K562 (cell line): ENCODE measurements at regions of chr11 and their contacts with region 1.

Region 1: DNA sequence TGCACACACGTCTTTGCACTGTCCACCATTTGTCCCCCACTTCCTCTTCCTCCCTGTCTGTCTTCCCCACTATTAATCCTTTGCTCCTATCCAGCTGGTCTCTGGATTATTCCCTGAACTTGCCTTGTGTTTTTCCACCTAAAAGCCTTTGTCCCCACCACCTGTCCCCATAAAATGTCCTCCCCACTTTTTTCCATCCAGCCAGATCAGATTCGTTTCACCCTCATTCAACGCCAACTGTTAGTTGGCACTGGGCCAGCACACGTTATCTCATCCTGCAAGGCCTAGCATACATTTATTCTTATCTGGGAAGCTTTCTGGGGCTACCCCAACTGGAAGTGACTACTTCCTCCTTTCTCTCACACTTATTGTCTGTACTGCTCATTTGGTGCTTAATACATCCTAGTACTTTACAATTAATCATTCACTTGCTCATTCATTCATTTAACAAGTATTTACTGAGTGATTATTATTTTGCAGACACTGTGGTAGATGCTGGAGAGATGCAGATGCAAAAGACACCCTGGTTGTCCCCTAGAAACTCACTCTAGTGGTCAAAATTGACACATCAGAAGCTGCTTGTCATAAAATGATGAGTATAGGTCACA is 96.2 kb downstream of the RASSF10 start:
- DNase-seq: peak; percentile 67 to 97 (median 75)
- ATAC-seq: peak; percentile 73
- H3K4me3 ChIP-seq: no peak overlapping the region; the same call in 1 of the 2 replicates
- H3K27ac ChIP-seq: peak overlapping the region; percentile 62
- H3K4me1 ChIP-seq: peaks cover 31 to 56% of the 10 kb centered on the region in 2 experiments
- H3K27me3 ChIP-seq: no peaks in the 10 kb centered on the region
- CTCF ChIP-seq: peak in 1 of 3 experiments; percentile 32; a peak in 1 of 6 replicates
- EP300 ChIP-seq: peak; percentile 97
- POLR2A ChIP-seq: no peak
- RAD21 ChIP-seq: peak in 1 of 2 experiments; percentile 73; a peak in 3 of 4 replicates

Region 2: GRCh38 chr11:12989428-12990161 is 115.7 kb before region 1 on chr11:
- CTCF ChIA-PET with region 1: no interaction called
- POLR2A ChIA-PET with region 1: no interaction called
- in situ Hi-C with region 1: loop called (anchors 10 kb)
- intact Hi-C with region 1: loop called (anchors 2 kb)
- DNase-seq: peak; percentile 75 to 97 (median 80)
- ATAC-seq: peak; percentile 90
- H3K4me3 ChIP-seq: peak overlapping the region; percentile 51
- H3K27ac ChIP-seq: peak overlapping the region; percentile 65
- H3K4me1 ChIP-seq: peaks cover 9 to 40% of the 10 kb centered on the region in 2 experiments; a peak in 3 of 5 replicates
- H3K27me3 ChIP-seq: no peaks in the 10 kb centered on the region
- CTCF ChIP-seq: no peak
- EP300 ChIP-seq: peak; percentile 91
- POLR2A ChIP-seq: peak; percentile 99
- RAD21 ChIP-seq: no peak

Region 3: DNA sequence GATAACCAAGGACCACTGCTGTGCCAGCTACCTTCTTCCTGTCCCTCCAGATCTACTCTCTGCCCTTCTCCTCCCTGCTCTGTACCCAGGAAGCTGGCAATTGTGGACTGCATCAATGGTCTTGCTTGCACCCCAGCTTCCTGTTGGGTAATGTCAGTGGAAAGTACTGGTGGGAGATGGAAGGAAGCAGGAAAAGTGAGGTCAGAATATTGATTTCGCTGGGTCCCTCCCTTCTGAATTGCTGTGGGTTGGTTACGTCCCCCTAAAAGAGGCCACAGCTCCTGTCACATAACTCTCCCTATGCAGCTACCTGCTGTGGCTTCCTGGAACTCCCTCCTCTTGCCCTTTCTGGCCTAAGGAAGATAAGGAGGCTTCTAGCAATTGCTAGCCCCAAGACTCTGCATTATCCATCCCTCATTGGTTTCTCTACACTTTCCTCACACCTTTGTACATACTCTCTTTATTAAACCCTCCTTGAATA is 15.1 kb before region 1 on chr11:
- CTCF ChIA-PET with region 1: no interaction called
- POLR2A ChIA-PET with region 1: interaction called, 9 read pairs
- in situ Hi-C with region 1: no loop called
- intact Hi-C with region 1: loop called (anchors 1 kb)
- DNase-seq: peak; percentile 56 to 94 (median 72)
- ATAC-seq: peak; percentile 98
- H3K4me3 ChIP-seq: no peak overlapping the region
- H3K27ac ChIP-seq: peak overlapping the region; percentile 68
- H3K4me1 ChIP-seq: peaks cover 4 to 18% of the 10 kb centered on the region in 2 experiments; a peak in 3 of 5 replicates
- H3K27me3 ChIP-seq: no peaks in the 10 kb centered on the region
- CTCF ChIP-seq: no peak
- EP300 ChIP-seq: peak; percentile 86; the same call in 1 of the 2 replicates
- POLR2A ChIP-seq: no peak
- RAD21 ChIP-seq: peak in 1 of 2 experiments; percentile 22; a peak in 1 of 4 replicates

Region 4: DNA sequence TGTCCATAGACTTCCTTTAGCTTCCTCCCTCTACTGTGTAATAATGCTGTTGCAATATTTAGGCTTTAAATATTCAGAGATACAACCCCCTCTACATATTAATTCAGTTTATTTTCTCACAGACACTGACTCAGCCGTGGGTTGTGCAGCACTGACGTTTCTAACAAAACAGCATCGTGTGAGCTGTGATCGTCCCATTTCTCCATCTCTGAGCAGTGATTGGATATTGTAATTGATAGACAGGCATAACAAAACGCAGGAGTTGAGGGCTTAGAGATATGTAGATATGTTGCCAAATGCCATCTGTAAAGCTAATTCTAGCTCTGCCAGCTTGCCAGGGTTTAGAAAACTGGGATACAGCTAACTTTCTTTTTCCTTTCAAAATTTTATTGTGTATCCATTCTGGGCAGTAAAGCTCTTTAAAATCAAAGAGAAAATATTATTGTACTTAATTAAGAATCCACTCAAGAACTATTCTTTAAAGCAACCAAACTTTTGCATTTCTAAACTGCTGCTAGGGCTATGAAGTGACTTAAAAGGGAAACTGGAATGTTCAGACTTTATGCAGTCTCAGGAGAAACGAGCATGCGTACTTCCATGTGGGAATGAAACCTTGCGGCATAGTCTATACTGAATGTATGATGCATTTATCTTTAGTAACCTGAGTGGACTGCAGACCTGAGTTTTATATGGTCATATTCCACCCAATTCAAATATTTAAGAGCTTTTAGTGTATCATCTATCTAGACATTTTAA is 334.9 kb after region 1 on chr11:
- CTCF ChIA-PET with region 1: no interaction called
- POLR2A ChIA-PET with region 1: no interaction called
- in situ Hi-C with region 1: no loop called
- intact Hi-C with region 1: no loop called
- DNase-seq: no peak
- ATAC-seq: no peak
- H3K4me3 ChIP-seq: no peak overlapping the region
- H3K27ac ChIP-seq: no peak overlapping the region
- H3K4me1 ChIP-seq: no peaks in the 10 kb centered on the region
- H3K27me3 ChIP-seq: no peaks in the 10 kb centered on the region
- CTCF ChIP-seq: no peak
- EP300 ChIP-seq: no peak
- POLR2A ChIP-seq: no peak
- RAD21 ChIP-seq: no peak